Right ventricle myocardium inferior (tissue), 1 donor: ENCODE measurements at regions of chr6 and their contacts with region 1.

Region 1: GRCh38 chr6:56637640-56638039 is 5.0 kb downstream of the DST start:
- DNase-seq: no peak
- ATAC-seq: no peak

Region 2: DNA sequence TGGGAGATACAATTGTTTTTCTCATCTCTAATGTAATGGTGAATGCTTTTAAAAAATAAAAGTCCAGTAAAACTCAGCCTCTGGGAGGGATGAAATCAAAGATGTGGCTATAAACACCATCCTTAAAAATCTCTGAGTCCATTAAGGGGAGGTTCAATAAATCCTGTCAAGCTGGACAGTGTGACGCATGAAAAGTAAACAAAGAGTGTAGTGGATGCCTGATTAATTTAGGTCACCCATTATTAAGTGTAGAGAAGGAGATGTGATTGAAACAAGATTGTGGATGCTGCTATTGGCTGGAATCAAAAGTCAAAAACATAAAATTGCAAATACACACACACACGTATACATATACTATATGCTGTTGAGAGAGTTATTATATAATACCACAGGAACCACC is 506.2 kb before region 1 on chr6:
- intact Hi-C with region 1: no loop called
- DNase-seq: no peak
- ATAC-seq: no peak

Region 3: DNA sequence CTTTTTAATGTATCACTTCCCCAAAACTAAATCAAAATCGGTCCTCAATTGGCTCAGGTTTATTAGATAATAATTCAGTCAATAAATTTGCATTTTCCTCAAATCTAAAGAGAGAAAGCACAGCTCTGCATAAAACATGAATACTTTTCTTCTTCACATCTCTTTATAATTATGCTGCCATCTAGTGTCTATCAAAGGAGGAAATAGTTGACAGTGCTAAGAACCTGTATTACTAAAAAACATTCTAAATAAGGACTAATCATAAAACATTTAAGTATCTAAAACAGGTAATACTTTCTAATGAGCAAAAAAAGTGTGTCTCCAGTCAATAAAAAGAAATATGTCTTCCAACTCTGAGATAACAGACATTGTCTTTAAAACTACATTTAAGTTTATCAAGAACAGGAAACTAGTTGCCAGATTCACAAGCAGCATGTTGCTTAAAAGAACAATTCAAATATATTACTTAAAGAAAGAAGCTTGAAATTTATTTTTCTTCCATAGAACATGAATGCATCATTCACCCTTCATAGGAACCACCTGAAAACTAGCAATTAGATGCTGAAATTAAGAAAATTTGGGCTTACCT is 61.5 kb after region 1 on chr6:
- intact Hi-C with region 1: loop called (anchors 1 kb)
- DNase-seq: no peak
- ATAC-seq: peak; percentile 56

Region 4: DNA sequence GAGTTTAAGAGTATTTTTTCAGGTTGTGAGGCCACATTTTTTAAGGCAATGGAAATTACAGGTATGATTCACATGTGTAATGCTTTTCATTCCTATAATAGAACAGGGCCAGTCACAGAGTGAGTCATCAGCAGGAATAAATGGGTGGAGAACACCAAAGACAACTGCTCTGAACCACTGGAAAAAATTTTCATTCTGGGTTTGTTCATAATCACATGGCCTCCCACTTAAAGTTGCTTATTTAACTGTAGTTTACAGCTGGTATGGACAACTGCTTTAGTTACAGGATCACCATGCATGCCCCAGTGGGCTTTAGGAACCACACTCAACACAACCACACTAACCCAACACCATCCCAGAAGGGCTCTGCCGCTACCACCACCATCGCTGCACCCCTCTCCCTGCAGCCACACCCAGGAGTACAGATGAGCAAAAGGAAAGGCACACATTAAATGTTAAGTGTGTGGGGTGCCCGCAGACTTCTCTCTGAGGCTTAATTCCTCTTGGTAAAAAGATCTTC is 112.1 kb after region 1 on chr6:
- intact Hi-C with region 1: loop called (anchors 5 kb)
- DNase-seq: no peak
- ATAC-seq: no peak

Region 5: DNA sequence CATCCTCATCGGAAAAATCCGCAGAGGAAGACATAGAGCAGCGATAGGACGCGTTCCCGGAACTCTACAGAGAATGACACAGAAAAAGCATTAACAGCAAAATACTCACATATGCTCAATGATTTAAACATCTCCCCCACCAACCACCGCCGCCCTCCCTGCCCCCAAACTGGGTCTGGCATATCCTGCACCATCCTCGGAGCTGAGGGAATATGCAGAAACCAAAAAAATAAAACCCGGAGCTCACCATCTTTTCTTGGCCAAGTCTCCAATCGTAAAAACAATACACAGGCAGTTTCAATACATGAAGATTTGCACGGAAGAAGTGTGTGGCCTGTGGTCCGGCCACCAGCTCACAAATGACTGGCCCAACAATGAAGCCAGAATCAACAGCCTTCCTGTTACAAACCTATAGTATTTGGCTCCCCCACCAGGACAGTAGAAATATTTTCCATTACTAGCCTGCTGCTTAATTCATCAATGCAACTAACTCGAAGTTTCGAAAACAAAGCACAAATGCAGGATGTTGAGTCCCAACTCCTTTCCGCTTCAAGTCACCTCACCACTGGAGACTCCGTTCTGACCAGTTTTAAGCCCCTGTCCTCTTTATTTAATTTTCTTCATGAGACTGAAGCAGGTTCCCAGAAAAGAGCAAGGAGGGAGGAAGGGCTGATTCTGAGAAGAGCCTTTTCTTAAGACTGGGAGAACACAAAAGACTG is 214.1 kb after region 1 on chr6:
- intact Hi-C with region 1: loop called (anchors 2 kb)
- DNase-seq: no peak
- ATAC-seq: peak; percentile 85